ENCODE measurements at regions of chr4 and their contacts with region 1.

Region 1: DNA sequence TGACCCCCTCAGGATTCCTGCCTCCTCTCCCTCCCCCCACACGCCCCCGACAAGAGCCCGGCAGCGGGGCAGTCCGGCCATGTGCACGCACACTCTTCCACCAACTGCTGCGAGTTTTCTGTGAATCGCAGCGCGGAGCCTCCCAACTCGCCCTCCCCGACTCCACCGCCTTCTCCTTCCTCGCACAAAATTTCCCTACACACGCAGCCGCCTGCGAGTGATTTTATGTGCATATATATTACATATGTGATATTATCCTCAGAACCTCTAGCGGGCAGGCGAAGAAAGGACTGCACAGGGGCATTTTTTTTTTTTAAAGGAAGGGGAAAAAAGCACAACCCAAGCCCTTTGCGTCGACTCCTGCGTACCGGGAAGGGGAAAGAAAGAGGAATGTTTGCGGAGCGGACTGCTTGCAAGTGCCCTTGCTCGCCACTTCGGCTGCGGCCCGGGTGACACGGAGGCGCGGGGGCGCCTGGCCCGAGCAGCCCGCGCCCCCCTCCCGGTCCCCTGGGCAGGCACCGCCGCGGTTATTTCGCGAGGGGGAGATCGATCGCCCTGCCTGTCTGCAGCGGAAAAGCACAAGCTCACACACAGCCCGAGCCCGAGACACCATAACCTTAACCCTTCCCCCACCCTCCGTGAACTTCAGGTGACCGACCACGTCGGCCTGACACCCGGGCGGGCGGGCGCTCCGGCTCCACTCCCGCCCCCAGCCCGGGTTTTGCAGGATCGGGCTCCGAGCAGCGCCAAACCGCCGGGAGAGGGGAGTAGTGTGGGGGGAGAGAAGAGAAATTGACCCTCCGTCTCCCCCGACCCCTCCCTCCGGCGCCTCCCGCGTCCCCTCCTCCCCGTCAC is 2.3 kb downstream of the ZNF827 start:
- DNase-seq: peak; percentile 86

Region 2: DNA sequence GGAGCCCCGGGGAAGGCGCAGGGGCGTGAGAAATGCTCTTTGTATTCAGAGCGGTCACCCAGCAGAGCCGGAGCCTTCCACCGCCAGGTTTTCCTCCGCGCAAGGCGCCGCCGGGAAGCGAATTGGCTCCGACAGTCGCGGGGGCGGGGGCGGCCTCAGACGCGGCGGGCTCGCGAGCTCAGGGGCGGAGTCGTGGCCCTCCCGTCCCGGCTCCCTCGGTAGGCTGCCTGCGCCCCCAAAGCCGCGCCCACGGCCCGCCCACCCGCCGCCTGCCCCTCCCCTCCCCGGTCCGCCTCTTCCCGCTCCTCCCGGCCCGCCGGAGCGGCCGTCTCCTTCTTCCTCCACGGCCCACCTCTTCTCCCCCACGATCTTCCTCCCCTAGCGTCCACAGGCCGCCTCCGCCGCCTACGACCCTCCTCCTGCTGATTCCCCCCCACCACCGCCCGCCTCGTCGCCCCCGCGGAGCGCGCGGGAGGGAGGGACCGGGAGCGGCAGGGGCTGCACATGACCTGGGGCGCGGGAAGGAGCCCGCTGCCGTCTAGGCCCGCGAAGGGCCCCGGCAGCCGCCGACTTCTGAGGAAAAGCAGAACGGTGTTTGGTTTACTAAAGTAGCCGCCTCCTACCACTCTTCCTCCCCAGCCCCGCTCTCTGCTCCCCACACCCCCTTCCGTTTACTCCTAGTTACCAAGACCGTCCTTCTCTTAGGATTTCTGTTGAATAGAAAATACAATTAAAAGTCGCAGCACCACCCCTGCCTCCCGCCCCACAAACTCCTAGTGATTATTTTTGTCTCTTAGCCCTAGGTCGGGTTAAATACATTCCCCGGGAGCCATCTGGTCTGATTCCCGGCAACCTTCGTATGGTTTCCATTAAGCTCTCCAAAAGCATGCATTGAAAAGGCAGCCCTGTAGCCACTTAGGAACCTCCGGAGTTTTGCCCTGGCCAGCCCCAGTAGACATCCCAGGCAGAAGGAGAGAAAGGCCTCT is 203.2 kb before region 1 on chr4:
- intact Hi-C with region 1: loop called (anchors 10 kb)
- DNase-seq: peak; percentile 98

Region 3: DNA sequence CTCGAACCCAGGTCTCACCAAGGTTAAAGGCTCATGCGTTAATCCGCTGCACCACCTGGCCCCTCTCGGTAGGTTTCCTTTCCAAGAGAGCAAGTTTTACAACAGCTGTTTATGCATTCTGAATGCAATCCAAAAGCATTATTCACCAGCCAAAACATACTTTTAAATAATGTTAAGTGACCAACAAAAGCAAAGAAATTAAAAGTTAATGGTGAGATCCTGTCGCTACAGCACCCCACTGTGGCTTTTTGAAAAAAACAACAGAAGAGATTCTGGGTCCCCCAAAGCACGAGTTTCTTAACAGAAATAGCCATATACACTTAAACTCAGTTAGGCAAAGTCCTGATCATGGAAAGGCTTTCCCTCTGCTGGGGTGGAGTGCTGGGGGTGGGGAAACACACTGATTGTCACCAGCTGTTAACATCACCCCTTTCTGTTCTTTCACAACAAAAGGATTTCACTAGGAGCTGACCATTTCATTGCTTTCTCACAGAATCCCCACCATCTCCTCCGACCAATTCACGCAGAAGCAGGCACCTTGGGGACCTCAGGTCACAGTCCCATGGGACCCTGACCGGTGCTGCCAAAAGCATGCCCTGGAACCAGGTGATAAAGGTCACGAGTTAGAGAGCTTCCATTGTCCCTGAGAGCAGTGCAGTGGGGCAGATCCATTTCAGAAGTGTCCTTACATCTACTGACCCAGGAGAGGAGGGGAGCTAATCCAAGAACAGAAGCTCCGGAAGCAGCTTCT is 49.0 kb before region 1 on chr4:
- intact Hi-C with region 1: loop called in 1 of 2 experiments (anchors 10 kb)
- DNase-seq: no peak

Region 4: DNA sequence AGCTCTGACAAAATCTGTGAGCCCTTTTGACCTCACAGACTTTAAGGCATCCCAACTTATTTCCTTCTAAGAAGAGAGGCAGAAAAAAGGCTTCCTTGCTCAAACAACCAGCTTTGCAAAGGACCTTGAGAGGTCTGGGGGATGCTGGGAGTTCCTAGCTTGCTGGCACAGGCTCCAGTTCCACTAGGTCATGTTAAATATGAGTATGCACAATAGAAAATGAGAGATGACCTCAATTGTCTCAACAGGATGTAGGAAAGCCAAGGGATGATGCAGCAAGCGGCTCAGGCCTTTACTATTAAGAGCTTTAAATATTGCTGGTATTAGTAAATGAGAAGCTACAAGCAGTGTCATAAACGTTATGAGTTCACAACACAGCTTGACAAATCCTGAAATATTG is 15.6 kb after region 1 on chr4:
- intact Hi-C with region 1: no loop called
- DNase-seq: no peak